ENCODE measurements at regions of chr19 and their contacts with region 1.

Region 1: GRCh38 chr19:41439441-41440222 is at the start of gene DMAC2:
- DNase-seq: peak; percentile 92 to 96
- H3K4me3 ChIP-seq: peak within 1 kb of the TSS; percentile 81 to 99 (median 90)
- H3K27ac ChIP-seq: peak within 1 kb of the TSS; percentile 98
- H3K4me1 ChIP-seq: no peaks in the 10 kb centered on the region
- H3K27me3 ChIP-seq: no peaks in the 10 kb centered on the region
- CTCF ChIP-seq: peak; percentile 47 to 76 (median 72)
- EP300 ChIP-seq: no peak
- POLR2A ChIP-seq: peak; percentile 79 to 98
- RAD21 ChIP-seq: peak; percentile 27 to 41; a peak in 3 of 4 replicates
- total RNA-seq, gene DMAC2: 86.8 and 92.2 TPM in 2 replicates

Region 2: DNA sequence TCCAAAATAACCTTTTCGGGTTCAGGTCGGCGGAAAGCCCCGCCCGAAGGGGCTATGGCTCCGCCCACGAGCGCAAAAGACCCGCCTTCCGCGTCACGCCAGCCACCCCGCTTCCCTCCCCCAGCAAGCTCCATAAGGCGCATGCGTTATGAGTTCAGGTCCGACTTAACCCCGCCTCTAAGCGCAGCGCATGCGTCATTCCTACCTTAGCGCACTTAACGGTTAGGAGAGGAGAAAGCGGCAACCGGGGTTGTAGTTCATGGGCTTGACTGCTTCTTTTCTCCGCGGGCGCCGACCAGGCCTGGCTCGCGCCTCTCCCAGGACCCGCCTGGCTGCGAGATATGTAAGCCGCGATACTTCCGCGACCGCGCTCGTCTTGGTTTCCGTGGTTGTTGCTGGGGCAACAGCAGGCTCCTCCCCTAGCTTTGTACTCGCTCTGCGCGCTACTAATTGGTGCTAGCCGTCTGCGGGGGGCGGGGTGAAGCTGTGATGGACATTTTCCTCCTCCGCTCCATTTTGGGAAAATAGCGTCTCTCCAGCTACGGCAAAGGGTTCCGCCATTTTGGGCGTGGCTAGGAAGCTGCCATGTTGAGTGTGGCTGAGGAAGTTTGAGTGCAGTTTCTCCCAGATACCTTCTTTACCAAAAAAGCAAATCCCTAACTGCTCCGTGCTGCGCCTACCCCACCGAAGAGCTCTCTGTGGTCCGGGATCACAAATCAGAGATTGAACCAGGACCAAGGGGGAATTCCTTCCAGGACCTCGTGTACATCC is 75.7 kb before region 1 on chr19 and contains the start of gene B9D2:
- CTCF ChIA-PET with region 1: interaction called, 5 read pairs
- POLR2A ChIA-PET with region 1: interaction called, 11 read pairs
- DNase-seq: peak; percentile 93 to 97
- H3K4me3 ChIP-seq: peak within 1 kb of the TSS; percentile 84 to 95 (median 90)
- H3K27ac ChIP-seq: peak within 1 kb of the TSS; percentile 98
- H3K4me1 ChIP-seq: peaks cover 0 to 6% (median 2%) of the 10 kb centered on the region in 4 experiments; a peak in 2 of 7 replicates
- H3K27me3 ChIP-seq: no peaks in the 10 kb centered on the region
- CTCF ChIP-seq: no peak
- EP300 ChIP-seq: no peak
- POLR2A ChIP-seq: peak in 1 of 2 experiments; percentile 77; a peak in 2 of 3 replicates
- RAD21 ChIP-seq: no peak
- total RNA-seq, gene B9D2: 4.9 and 5.0 TPM in 2 replicates

Region 3: GRCh38 chr19:41397086-41398049 is 42.3 kb before region 1 on chr19 and contains the starts of genes BCKDHA and EXOSC5:
- CTCF ChIA-PET with region 1: no interaction called
- POLR2A ChIA-PET with region 1: interaction called, 10 read pairs
- DNase-seq: peak; percentile 96 to 98
- H3K4me3 ChIP-seq: peak within 1 kb of the TSS; percentile 85 to 99 (median 98)
- H3K27ac ChIP-seq: peak within 1 kb of the TSS; percentile 96
- H3K4me1 ChIP-seq: peaks cover 0 to 5% (median 0%) of the 10 kb centered on the region in 4 experiments; a peak in 5 of 7 replicates
- H3K27me3 ChIP-seq: no peaks in the 10 kb centered on the region
- CTCF ChIP-seq: no peak
- EP300 ChIP-seq: no peak
- POLR2A ChIP-seq: peak; percentile 47 to 62
- RAD21 ChIP-seq: no peak
- total RNA-seq, gene BCKDHA: 14.2 and 15.2 TPM in 2 replicates
- total RNA-seq, gene EXOSC5: 56.2 and 66.0 TPM in 2 replicates

Region 4: DNA sequence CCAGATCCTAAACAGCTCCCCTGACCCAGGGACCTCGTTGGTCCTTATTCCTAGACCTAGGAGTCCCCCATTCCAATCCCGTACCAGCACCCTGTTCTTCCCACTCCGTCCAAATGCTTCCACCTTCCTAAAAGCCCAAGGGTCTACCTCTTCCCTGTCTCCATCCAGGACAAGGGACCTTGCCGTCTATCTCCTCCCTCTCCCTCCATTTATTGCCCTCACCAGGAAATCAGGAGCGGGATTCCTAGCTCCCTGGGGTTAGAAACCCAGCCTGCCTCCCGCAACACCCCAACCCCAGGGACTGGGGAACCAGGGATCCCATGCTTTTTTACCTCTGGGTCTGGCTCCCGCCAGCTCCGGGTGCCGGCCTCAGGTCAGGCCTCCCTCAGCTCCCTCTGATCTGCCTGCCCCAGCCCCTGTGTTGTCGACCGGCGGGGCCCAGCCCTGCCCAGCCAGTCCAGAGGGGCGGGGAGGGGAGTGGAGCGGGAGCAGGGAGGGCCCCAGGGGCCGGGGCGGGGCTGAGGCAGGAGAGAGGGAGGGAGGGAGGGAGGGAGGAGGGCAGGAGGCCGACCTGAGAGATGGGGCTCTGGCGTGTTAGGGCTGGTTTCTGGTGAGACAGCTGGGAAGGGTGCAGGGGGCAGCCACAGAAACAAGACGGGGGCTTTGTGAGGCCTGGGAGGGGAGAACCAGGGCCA is 12.5 kb before region 1 on chr19 and contains the start of gene B3GNT8:
- CTCF ChIA-PET with region 1: interaction called, 13 read pairs
- POLR2A ChIA-PET with region 1: interaction called, 87 read pairs
- DNase-seq: peak; percentile 56 to 88
- H3K4me3 ChIP-seq: peak within 1 kb of the TSS; percentile 40 to 77 (median 54); a peak in 7 of 8 replicates
- H3K27ac ChIP-seq: peak within 1 kb of the TSS; percentile 47; the same call in 1 of the 2 replicates
- H3K4me1 ChIP-seq: peaks cover 0 to 18% (median 4%) of the 10 kb centered on the region in 4 experiments; a peak in 5 of 7 replicates
- H3K27me3 ChIP-seq: no peaks in the 10 kb centered on the region
- CTCF ChIP-seq: no peak
- EP300 ChIP-seq: no peak
- POLR2A ChIP-seq: no peak; a peak in 1 of 3 replicates
- RAD21 ChIP-seq: no peak
- total RNA-seq, gene B3GNT8: 0.86 and 1.6 TPM in 2 replicates

Region 5: DNA sequence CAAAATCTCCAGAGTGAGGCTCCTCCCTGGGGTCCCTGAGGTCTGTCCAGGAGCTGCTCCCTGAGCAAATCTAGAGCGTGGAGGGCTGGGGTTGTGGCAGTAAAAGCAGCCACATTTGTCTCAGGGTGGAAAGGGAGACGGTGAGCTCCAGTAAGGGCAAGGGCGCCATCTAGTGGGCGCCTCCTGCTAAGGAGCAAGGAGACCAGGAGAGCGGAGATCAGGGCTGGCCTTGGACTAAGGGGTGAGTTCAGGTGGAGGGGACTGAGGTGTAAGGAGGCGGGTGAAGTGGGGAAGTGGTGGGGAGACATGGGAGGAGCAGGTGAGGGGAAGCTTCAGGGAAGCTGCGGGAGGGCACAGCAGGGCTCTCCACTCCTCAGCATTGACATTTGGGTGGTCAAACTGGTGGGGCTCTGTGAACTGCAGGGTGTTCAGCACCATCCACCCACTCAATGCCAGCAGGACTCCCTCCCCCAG is 131.0 kb after region 1 on chr19:
- CTCF ChIA-PET with region 1: interaction called, 364 read pairs
- POLR2A ChIA-PET with region 1: interaction called, 4 read pairs
- DNase-seq: peak; percentile 50 to 84
- H3K4me3 ChIP-seq: no peak overlapping the region
- H3K27ac ChIP-seq: no peak overlapping the region
- H3K4me1 ChIP-seq: no peaks in the 10 kb centered on the region; a peak in 2 of 7 replicates
- H3K27me3 ChIP-seq: peaks cover 0 to 13% (median 4%) of the 10 kb centered on the region in 4 experiments; a peak in 3 of 7 replicates
- CTCF ChIP-seq: peak; percentile 86 to 93 (median 88)
- EP300 ChIP-seq: no peak
- POLR2A ChIP-seq: no peak
- RAD21 ChIP-seq: peak; percentile 89 to 93

Measured in H1 (cell line).